ENCODE measurements at regions of chr3 and their contacts with region 1.

Region 1: DNA sequence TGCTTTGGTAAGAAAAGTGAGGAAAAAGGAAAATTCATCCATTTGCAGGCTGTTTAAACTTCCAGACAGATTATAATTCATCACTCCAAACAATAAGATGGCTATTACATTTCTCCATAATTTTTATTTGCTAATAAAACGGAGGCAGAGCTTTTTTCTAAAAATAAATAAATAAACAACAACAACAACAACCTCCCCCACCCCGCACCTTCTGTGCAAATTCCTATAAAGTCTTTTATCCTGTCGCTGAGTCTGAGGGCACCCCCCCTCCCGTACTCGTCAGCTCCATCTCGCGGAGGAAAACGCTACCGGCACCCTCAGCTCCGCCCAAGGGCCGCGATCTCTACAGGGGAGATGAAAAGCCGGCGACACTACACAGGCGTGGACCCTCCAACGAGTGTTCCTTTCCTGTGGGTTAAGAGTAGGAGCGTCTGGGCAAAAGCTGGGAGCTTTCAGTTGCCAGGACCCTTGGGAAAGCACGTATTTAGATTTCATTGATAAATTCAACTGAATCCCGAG is 1.0 kb upstream of the ATP1B3 start:
- DNase-seq: peak; percentile 52
- H3K4me3 ChIP-seq: peak overlapping the region; percentile 79
- H3K27ac ChIP-seq: peak overlapping the region; percentile 96
- H3K27me3 ChIP-seq: no peaks in the 10 kb centered on the region
- CTCF ChIP-seq: peak; percentile 91

Region 2: GRCh38 chr3:141738022-141738890 is 137.2 kb before region 1 on chr3 and contains the start of gene RNF7:
- CTCF ChIA-PET with region 1: interaction called, 36 read pairs
- POLR2A ChIA-PET with region 1: interaction called, 5 read pairs
- DNase-seq: peak; percentile 87
- H3K4me3 ChIP-seq: peak within 1 kb of the TSS; percentile 94
- H3K27ac ChIP-seq: peak within 1 kb of the TSS; percentile 71
- H3K27me3 ChIP-seq: no peaks in the 10 kb centered on the region
- CTCF ChIP-seq: peak; percentile 73
- polyA plus RNA-seq, gene RNF7: 97.1 and 113 TPM in 2 replicates

Region 3: GRCh38 chr3:141863491-141863890 is 11.9 kb before region 1 on chr3:
- CTCF ChIA-PET with region 1: interaction called, 16 read pairs
- POLR2A ChIA-PET with region 1: no interaction called
- DNase-seq: no peak
- H3K4me3 ChIP-seq: no peak overlapping the region
- H3K27ac ChIP-seq: no peak overlapping the region
- H3K27me3 ChIP-seq: no peaks in the 10 kb centered on the region
- CTCF ChIP-seq: no peak

Region 4: GRCh38 chr3:141894524-141895178 is 19.2 kb after region 1 on chr3:
- CTCF ChIA-PET with region 1: interaction called, 12 read pairs
- POLR2A ChIA-PET with region 1: interaction called, 7 read pairs
- DNase-seq: peak; percentile 63
- H3K4me3 ChIP-seq: no peak overlapping the region
- H3K27ac ChIP-seq: no peak overlapping the region
- H3K27me3 ChIP-seq: no peaks in the 10 kb centered on the region
- CTCF ChIP-seq: no peak

Measured in AG04450 (cell line).